Uterus (tissue), 4 donors: ENCODE measurements at regions of chrX and their contacts with region 1.

Region 1: GRCh38 chrX:40651620-40652223 is 4.4 kb upstream of the CXorf38 start:
- DNase-seq: peak; percentile 65 to 76
- H3K4me3 ChIP-seq: no peak overlapping the region
- H3K27ac ChIP-seq: no peak overlapping the region
- H3K4me1 ChIP-seq: no peaks in the 10 kb centered on the region
- H3K27me3 ChIP-seq: no peaks in the 10 kb centered on the region
- CTCF ChIP-seq: peak; percentile 82 to 90 (median 86)
- POLR2A ChIP-seq: no peak

Region 2: GRCh38 chrX:40792433-40792832 is 140.7 kb after region 1 on chrX:
- intact Hi-C with region 1: loop called (anchors 10 kb)
- DNase-seq: no peak
- H3K4me3 ChIP-seq: no peak overlapping the region
- H3K27ac ChIP-seq: no peak overlapping the region
- H3K4me1 ChIP-seq: no peaks in the 10 kb centered on the region
- H3K27me3 ChIP-seq: no peaks in the 10 kb centered on the region
- CTCF ChIP-seq: no peak
- POLR2A ChIP-seq: no peak

Region 3: DNA sequence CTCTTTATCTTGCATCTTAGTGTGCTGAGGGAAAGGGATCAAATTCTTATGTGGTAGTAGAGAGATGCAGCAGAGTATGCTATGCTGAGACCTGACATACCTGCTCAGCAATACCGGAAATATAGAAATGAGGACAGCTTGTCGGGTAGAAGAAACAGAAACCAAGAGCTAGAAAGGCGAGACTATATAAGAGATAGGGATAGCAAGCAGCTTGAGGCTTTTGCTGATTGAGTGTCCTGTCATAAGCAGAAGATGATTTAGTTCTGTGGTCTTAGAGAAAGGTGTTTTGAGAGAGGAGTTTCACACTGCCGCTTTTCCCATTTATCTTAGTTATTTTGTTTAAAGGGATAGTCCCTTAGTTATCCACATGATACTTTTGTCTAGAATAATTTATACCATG is 465.2 kb after region 1 on chrX:
- intact Hi-C with region 1: loop called (anchors 10 kb)
- DNase-seq: no peak
- H3K4me3 ChIP-seq: no peak overlapping the region
- H3K27ac ChIP-seq: no peak overlapping the region
- H3K4me1 ChIP-seq: peaks cover 0 to 9% of the 10 kb centered on the region in 2 donors
- H3K27me3 ChIP-seq: no peaks in the 10 kb centered on the region
- CTCF ChIP-seq: no peak
- POLR2A ChIP-seq: no peak